WTC11 (cell line): ENCODE measurements at regions of chr13 and their contacts with region 1.

Region 1: DNA sequence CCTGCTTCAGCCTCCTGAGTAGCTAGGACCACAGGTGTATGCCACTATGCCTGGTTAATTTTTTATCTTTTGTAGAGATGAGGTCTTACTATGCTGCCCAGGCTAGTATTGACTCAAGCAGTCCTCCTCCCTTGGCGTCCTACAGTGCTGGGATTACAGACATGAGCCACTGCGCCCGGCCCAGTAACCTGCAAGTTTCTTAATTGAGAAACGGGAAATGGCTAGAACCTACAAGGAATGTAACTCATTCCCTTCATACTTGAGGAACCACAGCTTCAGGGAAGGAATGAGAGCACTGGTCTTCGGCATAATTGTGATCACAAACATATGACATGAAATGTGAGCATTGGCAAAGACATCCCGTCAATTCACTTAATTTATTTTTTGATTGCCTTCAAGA is 157.0 kb downstream of the KLF5 start:
- DNase-seq: no peak
- ATAC-seq: no peak
- H3K4me3 Mint-ChIP-seq: no peak overlapping the region
- H3K27ac Mint-ChIP-seq: no peak overlapping the region
- H3K4me1 Mint-ChIP-seq: no peaks in the 10 kb centered on the region
- H3K27me3 Mint-ChIP-seq: no peaks in the 10 kb centered on the region
- CTCF ChIP-seq: no peak

Region 2: GRCh38 chr13:73861136-73861535 is 645.3 kb after region 1 on chr13:
- CTCF ChIA-PET with region 1: no interaction called
- POLR2A ChIA-PET with region 1: interaction called, 10 read pairs
- DNase-seq: no peak
- ATAC-seq: no peak
- H3K4me3 Mint-ChIP-seq: no peak overlapping the region
- H3K27ac Mint-ChIP-seq: peak overlapping the region; percentile 1; the same call in 1 of the 2 replicates
- H3K4me1 Mint-ChIP-seq: peaks cover 18% of the 10 kb centered on the region
- H3K27me3 Mint-ChIP-seq: no peaks in the 10 kb centered on the region
- CTCF ChIP-seq: no peak